OCI-LY7 (cell line): ENCODE measurements at regions of chr1 and their contacts with region 1.

Region 1: DNA sequence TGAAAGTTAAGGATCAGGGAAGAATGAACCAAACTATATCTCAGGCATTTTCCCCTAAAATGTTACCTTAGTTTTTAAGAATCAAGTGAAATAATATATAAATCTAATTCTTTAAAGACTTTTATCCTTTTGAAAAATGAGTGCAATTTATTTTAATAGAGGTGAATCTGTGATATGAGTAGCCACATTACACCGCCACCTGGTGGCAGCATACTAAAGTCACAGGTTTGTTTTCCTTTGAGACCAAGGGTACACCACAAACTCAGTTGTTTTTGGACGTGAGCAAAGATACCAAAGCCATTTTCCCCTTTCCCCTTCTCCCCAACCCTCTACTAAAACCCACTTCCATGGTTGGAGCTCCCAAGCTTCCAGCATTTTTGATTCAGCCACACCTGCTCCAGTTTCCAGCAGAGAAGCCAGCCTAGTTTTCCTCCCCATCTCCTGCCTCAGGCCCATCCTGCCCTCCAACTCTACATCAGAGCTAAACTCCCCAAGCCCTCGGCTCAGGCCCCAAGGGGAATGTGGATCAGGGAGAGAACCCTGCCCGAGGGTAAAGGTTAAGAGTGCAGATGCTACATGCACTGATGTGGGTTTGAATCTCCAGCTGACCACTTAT is 22.9 kb upstream of the LDLRAP1 start:
- DNase-seq: peak; percentile 80
- H3K4me3 ChIP-seq: no peak overlapping the region
- H3K27ac ChIP-seq: no peak overlapping the region
- H3K4me1 ChIP-seq: peaks cover 4% of the 10 kb centered on the region
- CTCF ChIP-seq: peak; percentile 95

Region 2: DNA sequence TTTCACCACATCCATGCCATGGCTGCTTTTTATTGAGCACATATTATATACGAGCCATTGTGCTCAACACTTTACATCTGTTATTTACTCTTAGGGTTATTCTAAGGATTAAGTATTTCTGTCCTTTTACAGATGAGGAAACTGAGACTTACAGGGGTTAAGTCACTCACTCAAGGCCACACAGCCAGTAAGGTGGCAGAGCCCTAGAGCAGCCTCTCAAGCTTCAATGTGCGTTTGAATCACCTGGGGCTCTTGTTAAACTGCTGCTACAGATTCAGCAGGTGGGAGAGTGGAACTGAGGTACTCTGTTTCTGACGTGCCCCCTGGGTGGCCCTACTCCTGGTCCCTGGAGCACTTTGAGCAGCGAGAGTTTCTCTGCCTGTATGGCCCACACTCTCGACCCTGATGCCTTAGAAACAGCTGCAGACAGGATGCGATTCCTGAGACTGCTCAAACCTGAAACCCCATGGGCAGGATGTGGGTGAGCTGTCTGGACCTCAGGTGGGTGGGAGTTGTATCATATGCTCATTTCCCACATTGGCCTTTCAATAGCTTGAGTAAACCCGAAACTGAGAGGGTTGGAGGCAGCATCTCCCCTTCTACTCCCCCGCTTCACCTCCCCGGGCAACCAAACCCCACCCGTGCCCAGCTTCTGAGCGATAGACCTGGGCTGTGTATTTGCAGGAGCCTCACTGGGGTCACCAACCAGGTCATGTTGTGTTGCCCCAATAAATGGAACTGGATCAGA is 155.3 kb after region 1 on chr1:
- CTCF ChIA-PET with region 1: no interaction called
- POLR2A ChIA-PET with region 1: no interaction called
- intact Hi-C with region 1: no loop called
- DNase-seq: peak; percentile 81
- H3K4me3 ChIP-seq: no peak overlapping the region
- H3K27ac ChIP-seq: peak overlapping the region; percentile 8
- H3K4me1 ChIP-seq: peaks cover 33% of the 10 kb centered on the region
- CTCF ChIP-seq: no peak

Region 3: GRCh38 chr1:25810341-25811299 is 290.1 kb after region 1 on chr1:
- CTCF ChIA-PET with region 1: interaction called, 5 read pairs
- POLR2A ChIA-PET with region 1: interaction called, 4 read pairs
- intact Hi-C with region 1: loop called (anchors 5 kb)
- DNase-seq: peak; percentile 76
- H3K4me3 ChIP-seq: no peak overlapping the region
- H3K27ac ChIP-seq: peak overlapping the region; percentile 43
- H3K4me1 ChIP-seq: peaks cover 21% of the 10 kb centered on the region
- CTCF ChIP-seq: peak; percentile 94